ENCODE measurements at regions of chr5 and their contacts with region 1.

Region 1: DNA sequence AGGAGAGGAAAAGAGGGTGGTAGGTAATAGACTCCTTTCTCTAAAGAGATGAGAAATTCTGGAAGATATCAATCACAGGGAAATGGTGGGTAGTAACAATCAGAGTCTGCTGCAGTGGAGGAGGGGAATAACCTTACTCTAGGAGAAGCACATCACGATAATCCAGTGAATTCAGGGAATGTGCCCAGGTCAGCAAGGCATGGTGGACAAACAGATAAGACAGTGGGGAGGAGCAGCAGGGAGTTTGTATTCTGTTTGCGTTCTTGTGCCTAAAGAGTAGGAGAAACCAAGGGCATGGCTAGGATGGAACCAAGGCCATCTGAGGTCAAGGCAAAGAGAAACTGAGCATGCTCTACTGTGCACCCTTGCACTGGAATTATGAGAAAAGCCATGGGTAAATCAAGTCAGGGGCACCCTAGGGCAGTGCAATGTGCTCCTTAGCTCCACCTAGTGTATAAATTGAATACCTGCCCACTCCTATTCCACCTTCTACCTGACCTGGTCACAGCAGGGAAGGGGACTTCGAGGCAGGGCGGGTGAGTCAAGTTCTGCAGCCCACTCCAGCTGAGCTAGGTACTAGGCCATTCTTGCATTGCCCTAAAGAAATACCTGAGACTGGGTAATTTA is 31.6 kb downstream of the RETREG1 start:
- DNase-seq: no peak
- H3K4me3 ChIP-seq: no peak overlapping the region
- H3K27me3 ChIP-seq: 0 out of 2 replicates have a peak, but pooled peaks cover 1% of the 10 kb centered on the region
- CTCF ChIP-seq: peak; percentile 51

Region 2: GRCh38 chr5:16568875-16569580 is 16.1 kb before region 1 on chr5:
- CTCF ChIA-PET with region 1: interaction called, 14 read pairs
- POLR2A ChIA-PET with region 1: no interaction called
- DNase-seq: no peak
- H3K4me3 ChIP-seq: no peak overlapping the region
- H3K27me3 ChIP-seq: no peaks in the 10 kb centered on the region
- CTCF ChIP-seq: no peak

Region 3: GRCh38 chr5:16596581-16596940 is 11.4 kb after region 1 on chr5:
- CTCF ChIA-PET with region 1: interaction called, 11 read pairs
- POLR2A ChIA-PET with region 1: no interaction called
- DNase-seq: peak; percentile 9
- H3K4me3 ChIP-seq: no peak overlapping the region
- H3K27me3 ChIP-seq: no peaks in the 10 kb centered on the region; the same call in 1 of the 2 replicates
- CTCF ChIP-seq: no peak

Measured in BJ (cell line).